Transverse colon (tissue), 4 donors: ENCODE measurements at regions of chr11 and their contacts with region 1.

Region 1: GRCh38 chr11:79388201-79388600 is 52.6 kb downstream of the TENM4 start:
- DNase-seq: no peak
- H3K4me3 ChIP-seq: no peak overlapping the region
- H3K27ac ChIP-seq: no peak overlapping the region
- H3K4me1 ChIP-seq: no peaks in the 10 kb centered on the region
- H3K27me3 ChIP-seq: no peaks in the 10 kb centered on the region
- CTCF ChIP-seq: no peak
- EP300 ChIP-seq: no peak
- POLR2A ChIP-seq: no peak

Region 2: GRCh38 chr11:78548911-78549590 is 839.1 kb before region 1 on chr11:
- in situ Hi-C with region 1: no loop called
- intact Hi-C with region 1: no loop called
- DNase-seq: no peak
- H3K4me3 ChIP-seq: no peak overlapping the region
- H3K27ac ChIP-seq: no peak overlapping the region
- H3K4me1 ChIP-seq: peaks cover 0 to 19% (median 0%) of the 10 kb centered on the region in 4 donors
- H3K27me3 ChIP-seq: no peaks in the 10 kb centered on the region
- CTCF ChIP-seq: no peak
- EP300 ChIP-seq: no peak
- POLR2A ChIP-seq: no peak

Region 3: DNA sequence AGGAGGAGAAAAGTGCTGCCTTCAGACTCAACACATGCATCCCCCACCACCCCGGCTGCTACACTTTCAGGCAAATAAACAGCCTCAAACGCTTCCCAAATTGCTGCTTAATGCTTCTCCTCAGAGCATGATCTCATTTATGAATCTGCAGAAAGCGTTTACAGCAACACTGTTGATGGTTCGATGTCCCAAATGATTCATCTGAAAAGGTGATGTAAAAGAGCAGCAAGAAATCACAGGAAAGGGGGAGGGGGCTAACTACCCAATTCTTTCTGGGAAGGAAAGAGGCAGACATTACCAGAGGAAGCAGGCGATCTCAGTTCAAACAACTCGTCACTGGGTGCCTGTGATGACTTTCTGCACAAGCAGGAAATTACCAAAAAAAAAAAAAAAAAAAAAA is 66.9 kb before region 1 on chr11:
- in situ Hi-C with region 1: loop called in 1 of 4 experiments (anchors 10 kb)
- intact Hi-C with region 1: no loop called
- DNase-seq: no peak
- H3K4me3 ChIP-seq: no peak overlapping the region
- H3K27ac ChIP-seq: no peak overlapping the region
- H3K4me1 ChIP-seq: no peaks in the 10 kb centered on the region
- H3K27me3 ChIP-seq: no peaks in the 10 kb centered on the region
- CTCF ChIP-seq: no peak
- EP300 ChIP-seq: no peak
- POLR2A ChIP-seq: no peak